GM12878 (cell line): ENCODE measurements at regions of chr9 and their contacts with region 1.

Region 1: DNA sequence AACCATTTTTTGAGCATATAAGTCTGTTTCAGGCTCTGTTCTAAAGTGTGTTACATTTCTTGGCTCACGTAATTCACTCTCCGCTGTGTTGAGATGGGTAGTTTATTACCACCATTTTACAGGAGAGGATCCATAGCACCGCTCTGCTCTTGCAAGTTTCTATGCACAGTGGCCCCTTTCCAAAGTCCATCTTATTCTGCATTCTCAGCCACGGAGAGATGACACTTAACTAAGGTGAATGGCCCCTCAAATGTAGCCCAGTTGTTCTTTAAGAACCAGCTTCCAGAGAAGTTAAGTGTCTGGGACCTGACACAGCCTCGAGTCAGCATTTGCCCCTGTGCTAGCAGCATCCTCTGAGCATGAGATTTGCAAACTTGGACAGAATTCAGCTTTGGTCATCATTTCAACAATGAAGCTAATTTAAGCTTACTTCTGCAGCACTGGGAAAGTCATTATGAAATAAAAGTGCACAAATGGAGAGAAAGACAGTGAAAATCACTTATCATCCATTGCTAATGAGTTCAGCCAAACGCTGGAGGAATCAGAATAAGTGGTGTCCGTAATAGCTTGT is 61.9 kb downstream of the FAM78A start:
- DNase-seq: no peak
- ATAC-seq: no peak
- H3K4me3 ChIP-seq: no peak overlapping the region
- H3K27ac ChIP-seq: no peak overlapping the region
- H3K4me1 ChIP-seq: no peaks in the 10 kb centered on the region
- H3K27me3 ChIP-seq: no peaks in the 10 kb centered on the region
- CTCF ChIP-seq: no peak
- EP300 ChIP-seq: no peak
- POLR2A ChIP-seq: no peak
- RAD21 ChIP-seq: no peak

Region 2: GRCh38 chr9:131203431-131204218 is 10.7 kb before region 1 on chr9:
- CTCF ChIA-PET with region 1: interaction called, 4 read pairs
- POLR2A ChIA-PET with region 1: no interaction called
- RAD21 ChIA-PET with region 1: no interaction called
- SMC1A ChIA-PET with region 1: interaction called, 12 read pairs
- in situ Hi-C with region 1: no loop called
- intact Hi-C with region 1: no loop called
- DNase-seq: no peak
- ATAC-seq: peak; percentile 66
- H3K4me3 ChIP-seq: no peak overlapping the region
- H3K27ac ChIP-seq: no peak overlapping the region
- H3K4me1 ChIP-seq: no peaks in the 10 kb centered on the region
- H3K27me3 ChIP-seq: no peaks in the 10 kb centered on the region
- CTCF ChIP-seq: peak; percentile 23 to 42 (median 38); a peak in 5 of 6 replicates
- EP300 ChIP-seq: no peak
- POLR2A ChIP-seq: no peak
- RAD21 ChIP-seq: peak; percentile 41

Region 3: GRCh38 chr9:131266266-131267229 is 52.2 kb after region 1 on chr9:
- CTCF ChIA-PET with region 1: no interaction called
- POLR2A ChIA-PET with region 1: no interaction called
- RAD21 ChIA-PET with region 1: no interaction called
- SMC1A ChIA-PET with region 1: no interaction called
- in situ Hi-C with region 1: no loop called
- intact Hi-C with region 1: no loop called
- DNase-seq: no peak
- ATAC-seq: no peak
- H3K4me3 ChIP-seq: no peak overlapping the region
- H3K27ac ChIP-seq: no peak overlapping the region
- H3K4me1 ChIP-seq: peaks cover 46% of the 10 kb centered on the region
- H3K27me3 ChIP-seq: no peaks in the 10 kb centered on the region
- CTCF ChIP-seq: no peak
- EP300 ChIP-seq: no peak
- POLR2A ChIP-seq: no peak; the same call in 1 of the 2 replicates
- RAD21 ChIP-seq: no peak